ENCODE measurements at regions of chrX and their contacts with region 1.

Region 1: GRCh38 chrX:40809210-40809609 is 73.9 kb upstream of the MED14 start:
- DNase-seq: no peak
- ATAC-seq: no peak
- H3K4me3 ChIP-seq: no peak overlapping the region
- H3K27ac ChIP-seq: no peak overlapping the region
- H3K4me1 ChIP-seq: peaks cover 0 to 11% (median 0%) of the 10 kb centered on the region in 9 donors
- H3K27me3 ChIP-seq: peaks cover 0 to 25% (median 0%) of the 10 kb centered on the region in 7 donors
- CTCF ChIP-seq: no peak

Region 2: GRCh38 chrX:40663880-40664633 is 145.2 kb before region 1 on chrX:
- intact Hi-C with region 1: loop called in 1 of 10 experiments (anchors 10 kb)
- DNase-seq: no peak
- ATAC-seq: peak in 1 of 8 donors; percentile 41
- H3K4me3 ChIP-seq: no peak overlapping the region
- H3K27ac ChIP-seq: no peak overlapping the region
- H3K4me1 ChIP-seq: no peaks in the 10 kb centered on the region
- H3K27me3 ChIP-seq: peaks cover 0 to 52% (median 0%) of the 10 kb centered on the region in 7 donors
- CTCF ChIP-seq: peak in 6 of 9 donors; percentile 27 to 47 (median 38)

Region 3: DNA sequence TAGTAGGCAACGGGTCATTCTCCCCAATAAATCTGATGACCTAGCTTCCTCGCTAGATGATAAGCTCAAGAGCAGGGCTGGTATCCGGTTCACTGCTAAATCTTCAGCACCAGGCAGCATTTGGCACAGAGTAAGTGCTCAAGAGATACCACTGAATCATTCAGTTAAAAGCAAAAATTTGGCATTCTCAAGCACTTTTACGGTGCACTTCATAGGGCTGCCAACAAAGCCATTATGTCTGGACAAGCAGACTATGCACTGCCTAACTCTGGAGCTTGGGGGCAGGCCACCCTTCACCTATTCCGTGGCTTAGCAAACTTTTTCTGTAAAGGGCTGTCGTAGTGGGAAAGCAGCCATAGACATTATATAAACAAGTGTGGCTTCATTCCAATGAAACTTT is 138.1 kb before region 1 on chrX:
- intact Hi-C with region 1: loop called in 2 of 10 experiments (anchors 10 kb)
- DNase-seq: no peak
- ATAC-seq: peak in 4 of 8 donors; percentile 47 to 78 (median 54)
- H3K4me3 ChIP-seq: no peak overlapping the region
- H3K27ac ChIP-seq: peak overlapping the region in 2 of 10 donors; percentile 25 to 28
- H3K4me1 ChIP-seq: peaks cover 0 to 9% (median 0%) of the 10 kb centered on the region in 9 donors
- H3K27me3 ChIP-seq: peaks cover 0 to 60% (median 0%) of the 10 kb centered on the region in 7 donors
- CTCF ChIP-seq: peak in 2 of 9 donors; percentile 21 to 24

Measured in heart right ventricle (tissue), 16 donors.